HepG2 (cell line): ENCODE measurements at regions of chr13 and their contacts with region 1.

Region 1: GRCh38 chr13:52011632-52012511 is at the start of gene ALG11:
- DNase-seq: peak; percentile 97
- ATAC-seq: peak; percentile 92
- H3K4me3 ChIP-seq: peak within 1 kb of the TSS; percentile 97 to 98 (median 98)
- H3K27ac ChIP-seq: peak within 1 kb of the TSS; percentile 97
- H3K4me1 ChIP-seq: peaks cover 61% of the 10 kb centered on the region
- H3K27me3 ChIP-seq: no peaks in the 10 kb centered on the region; a peak in 1 of 5 replicates
- CTCF ChIP-seq: peak; percentile 36; the same call in 1 of the 2 replicates
- EP300 ChIP-seq: peak; percentile 25 to 89; a peak in 2 of 4 replicates
- POLR2A ChIP-seq: peak; percentile 90 to 98
- RAD21 ChIP-seq: peak; percentile 72
- total RNA-seq, gene ALG11: 25.4 and 27.9 TPM in 2 replicates

Region 2: DNA sequence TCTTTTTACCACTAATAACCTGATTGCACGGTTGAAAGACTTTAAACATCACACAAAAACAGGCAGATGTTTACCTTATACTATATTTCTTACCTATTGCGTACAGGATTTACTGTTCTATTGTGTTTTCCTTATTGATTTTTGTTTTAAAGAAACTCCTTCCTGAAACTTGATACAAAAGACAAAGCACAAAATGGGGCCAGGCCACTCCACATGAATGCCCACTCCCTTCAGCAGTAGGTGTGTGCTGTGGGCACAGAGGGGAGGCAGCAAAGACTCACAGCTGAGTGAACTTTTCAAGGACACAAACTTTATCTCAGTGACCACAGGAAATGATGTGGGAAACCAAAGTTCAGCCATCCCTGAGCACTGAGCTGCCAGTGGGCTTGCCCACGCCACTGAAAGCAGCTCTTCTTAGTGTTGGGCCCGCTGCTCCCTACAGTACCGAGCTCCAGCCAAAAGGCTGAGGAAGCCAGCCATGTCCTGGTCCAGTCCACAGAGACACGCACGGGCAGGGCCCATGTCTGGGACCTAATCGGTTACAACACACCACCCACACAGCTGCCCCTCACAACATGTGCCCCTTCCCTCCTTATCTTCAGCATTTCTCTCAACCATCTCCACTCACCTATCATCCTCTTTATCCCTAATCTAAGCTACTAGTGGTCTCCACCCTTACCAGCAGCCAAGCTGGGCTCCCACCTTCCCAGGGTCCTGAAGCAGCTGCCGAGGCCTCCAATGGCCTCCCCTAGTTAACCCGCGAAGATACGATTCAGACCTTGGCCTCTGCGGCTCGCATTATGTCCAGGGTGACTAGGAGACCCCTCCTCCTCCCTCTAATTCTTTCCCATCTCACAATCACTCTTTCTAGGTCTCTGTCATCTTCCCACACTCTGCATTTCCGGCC is 40.1 kb before region 1 on chr13:
- CTCF ChIA-PET with region 1: no interaction called
- POLR2A ChIA-PET with region 1: interaction called, 8 read pairs
- in situ Hi-C with region 1: no loop called
- intact Hi-C with region 1: loop called (anchors 1 kb)
- DNase-seq: peak; percentile 58
- ATAC-seq: peak; percentile 88
- H3K4me3 ChIP-seq: no peak overlapping the region
- H3K27ac ChIP-seq: peak overlapping the region; percentile 52
- H3K4me1 ChIP-seq: peaks cover 29% of the 10 kb centered on the region
- H3K27me3 ChIP-seq: no peaks in the 10 kb centered on the region
- CTCF ChIP-seq: peak; percentile 69
- EP300 ChIP-seq: peak in 1 of 2 experiments; percentile 28; a peak in 1 of 4 replicates
- POLR2A ChIP-seq: no peak
- RAD21 ChIP-seq: peak; percentile 32; the same call in 1 of the 2 replicates

Region 3: GRCh38 chr13:52001120-52001731 is 10.6 kb before region 1 on chr13:
- CTCF ChIA-PET with region 1: interaction called, 5 read pairs
- POLR2A ChIA-PET with region 1: interaction called, 32 read pairs
- in situ Hi-C with region 1: no loop called
- intact Hi-C with region 1: no loop called
- DNase-seq: peak; percentile 59
- ATAC-seq: peak; percentile 11; the same call in 2 of the 3 replicates
- H3K4me3 ChIP-seq: no peak overlapping the region
- H3K27ac ChIP-seq: no peak overlapping the region
- H3K4me1 ChIP-seq: peaks cover 96% of the 10 kb centered on the region
- H3K27me3 ChIP-seq: no peaks in the 10 kb centered on the region
- CTCF ChIP-seq: peak; percentile 66
- EP300 ChIP-seq: no peak
- POLR2A ChIP-seq: no peak
- RAD21 ChIP-seq: no peak

Region 4: DNA sequence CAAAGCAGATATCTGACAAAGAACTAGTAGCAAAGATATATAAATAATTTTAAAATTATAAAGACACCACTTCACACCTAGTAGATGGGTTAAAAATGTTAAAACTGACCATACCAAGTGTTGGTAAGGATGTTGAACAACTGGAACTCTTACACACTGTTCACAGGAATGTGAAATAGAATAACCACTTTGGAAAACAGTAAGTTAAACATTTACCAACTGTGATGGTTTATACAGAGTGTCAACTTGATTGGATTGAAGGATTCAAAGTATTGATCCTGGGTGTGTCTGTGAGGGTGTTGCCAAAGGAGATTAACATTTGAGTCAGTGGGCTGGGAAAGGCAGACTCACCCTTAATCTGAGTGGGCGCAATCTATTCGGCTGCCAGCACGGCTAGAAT is 31.8 kb after region 1 on chr13:
- CTCF ChIA-PET with region 1: no interaction called
- POLR2A ChIA-PET with region 1: no interaction called
- in situ Hi-C with region 1: no loop called
- intact Hi-C with region 1: loop called (anchors 2 kb)
- DNase-seq: peak; percentile 35
- ATAC-seq: peak; percentile 93
- H3K4me3 ChIP-seq: no peak overlapping the region
- H3K27ac ChIP-seq: no peak overlapping the region
- H3K4me1 ChIP-seq: peaks cover 14% of the 10 kb centered on the region
- H3K27me3 ChIP-seq: no peaks in the 10 kb centered on the region
- CTCF ChIP-seq: no peak
- EP300 ChIP-seq: no peak
- POLR2A ChIP-seq: no peak
- RAD21 ChIP-seq: no peak

Region 5: GRCh38 chr13:52450012-52450792 is 438.3 kb after region 1 on chr13 and contains the start of gene VPS36:
- CTCF ChIA-PET with region 1: no interaction called
- POLR2A ChIA-PET with region 1: no interaction called
- in situ Hi-C with region 1: loop called (anchors 25 kb)
- intact Hi-C with region 1: no loop called
- DNase-seq: peak; percentile 83
- ATAC-seq: peak; percentile 86
- H3K4me3 ChIP-seq: peak within 1 kb of the TSS; percentile 66 to 87 (median 84)
- H3K27ac ChIP-seq: peak within 1 kb of the TSS; percentile 88
- H3K4me1 ChIP-seq: peaks cover 37% of the 10 kb centered on the region
- H3K27me3 ChIP-seq: no peaks in the 10 kb centered on the region; a peak in 1 of 5 replicates
- CTCF ChIP-seq: peak; percentile 98
- EP300 ChIP-seq: peak in 1 of 2 experiments; percentile 66; a peak in 1 of 4 replicates
- POLR2A ChIP-seq: peak in 1 of 2 experiments; percentile 90; a peak in 2 of 4 replicates
- RAD21 ChIP-seq: peak; percentile 95
- total RNA-seq, gene VPS36: 22.0 and 22.4 TPM in 2 replicates